ENCODE measurements at regions of chr12 and their contacts with region 1.

Region 1: GRCh38 chr12:96219698-96220206 is 25.6 kb downstream of the ELK3 start:
- DNase-seq: no peak
- H3K4me3 ChIP-seq: no peak overlapping the region
- H3K27ac ChIP-seq: peak overlapping the region in 1 of 2 experiments; percentile 3
- H3K4me1 ChIP-seq: peaks cover 19 to 43% (median 33%) of the 10 kb centered on the region in 4 experiments
- H3K27me3 ChIP-seq: no peaks in the 10 kb centered on the region

Region 2: DNA sequence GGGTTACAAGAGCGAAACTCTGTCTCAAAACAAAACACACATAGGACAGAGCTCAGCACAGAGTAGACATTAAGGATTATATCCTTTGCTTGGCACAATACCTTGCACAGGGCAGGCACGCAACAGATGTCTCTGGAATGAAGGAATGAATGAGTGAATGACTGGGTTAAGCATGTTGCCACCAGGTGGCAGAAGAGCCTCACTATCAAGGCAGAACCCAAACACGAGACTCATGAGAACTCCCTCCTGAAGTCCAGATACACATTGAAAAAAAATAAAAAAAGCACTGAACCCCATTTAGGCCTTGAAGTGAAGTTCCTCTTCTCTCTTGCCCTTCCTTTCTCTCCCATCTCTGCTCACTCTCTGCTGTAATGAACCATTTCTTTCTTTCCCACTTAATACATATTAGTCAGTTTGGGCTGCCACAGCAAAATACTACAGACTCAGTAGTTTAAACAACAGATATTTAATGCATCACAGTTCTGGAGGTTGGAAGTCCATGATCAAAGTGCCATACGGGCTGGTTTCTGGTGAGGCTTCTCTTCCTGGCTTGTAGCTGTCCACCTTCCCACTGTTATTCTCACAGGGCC is 157.8 kb before region 1 on chr12:
- CTCF ChIA-PET with region 1: interaction called, 225 read pairs
- POLR2A ChIA-PET with region 1: interaction called, 4 read pairs
- DNase-seq: peak; percentile 93 to 97 (median 95)
- H3K4me3 ChIP-seq: no peak overlapping the region
- H3K27ac ChIP-seq: no peak overlapping the region
- H3K4me1 ChIP-seq: peaks cover 5 to 20% (median 14%) of the 10 kb centered on the region in 4 experiments
- H3K27me3 ChIP-seq: no peaks in the 10 kb centered on the region

Region 3: DNA sequence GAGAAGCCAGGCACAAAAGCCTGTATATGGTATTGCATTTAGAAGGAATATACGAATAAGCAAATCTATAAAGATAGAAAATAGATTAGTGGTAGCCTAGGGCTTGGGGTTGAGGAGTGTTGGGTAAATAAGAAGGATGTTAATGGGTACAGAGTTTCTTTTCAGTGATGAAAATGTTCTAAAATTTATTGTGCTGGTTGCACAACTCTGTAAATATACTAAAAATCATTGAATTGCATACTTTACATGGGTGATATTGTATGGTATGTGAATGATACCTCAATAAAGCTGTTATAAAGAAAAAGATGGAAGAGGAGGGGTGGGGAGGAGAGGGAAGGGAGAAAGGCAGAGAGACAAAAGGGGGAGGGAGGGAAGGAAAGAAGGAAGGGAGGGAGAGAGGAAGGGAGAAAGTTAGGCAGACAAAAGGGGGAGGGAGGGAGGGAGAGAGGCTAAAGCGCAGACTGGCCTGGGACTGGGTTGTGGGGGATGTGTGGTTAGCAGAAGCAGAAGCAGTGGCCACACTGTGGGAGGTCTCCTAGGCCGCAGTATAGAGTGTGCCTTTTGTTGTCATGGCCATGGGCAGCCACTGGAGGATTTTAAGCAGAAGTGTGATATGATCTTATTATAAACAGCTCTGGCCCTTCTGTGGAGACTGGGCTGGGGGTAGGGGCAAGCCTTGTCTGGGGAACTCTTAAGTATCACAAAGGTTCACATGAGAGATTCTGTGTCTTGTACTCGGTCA is 99.2 kb before region 1 on chr12:
- CTCF ChIA-PET with region 1: interaction called, 11 read pairs
- POLR2A ChIA-PET with region 1: no interaction called
- DNase-seq: peak; percentile 86 to 97 (median 97)
- H3K4me3 ChIP-seq: peak overlapping the region in 2 of 7 experiments; percentile 4 to 61
- H3K27ac ChIP-seq: peak overlapping the region; percentile 27 to 59
- H3K4me1 ChIP-seq: peaks cover 8 to 35% (median 24%) of the 10 kb centered on the region in 4 experiments
- H3K27me3 ChIP-seq: no peaks in the 10 kb centered on the region

Region 4: GRCh38 chr12:96237465-96238077 is 17.8 kb after region 1 on chr12:
- CTCF ChIA-PET with region 1: interaction called, 10 read pairs
- POLR2A ChIA-PET with region 1: interaction called, 3 read pairs
- DNase-seq: peak; percentile 84 to 97 (median 95)
- H3K4me3 ChIP-seq: peak overlapping the region in 4 of 7 experiments; percentile 8 to 50 (median 36)
- H3K27ac ChIP-seq: peak overlapping the region; percentile 60 to 74
- H3K4me1 ChIP-seq: peaks cover 2 to 77% (median 53%) of the 10 kb centered on the region in 4 experiments
- H3K27me3 ChIP-seq: no peaks in the 10 kb centered on the region

Region 5: GRCh38 chr12:96263449-96263902 is 43.7 kb after region 1 on chr12:
- CTCF ChIA-PET with region 1: no interaction called
- POLR2A ChIA-PET with region 1: no interaction called
- DNase-seq: no peak
- H3K4me3 ChIP-seq: no peak overlapping the region
- H3K27ac ChIP-seq: no peak overlapping the region
- H3K4me1 ChIP-seq: no peaks in the 10 kb centered on the region
- H3K27me3 ChIP-seq: no peaks in the 10 kb centered on the region

Region 6: DNA sequence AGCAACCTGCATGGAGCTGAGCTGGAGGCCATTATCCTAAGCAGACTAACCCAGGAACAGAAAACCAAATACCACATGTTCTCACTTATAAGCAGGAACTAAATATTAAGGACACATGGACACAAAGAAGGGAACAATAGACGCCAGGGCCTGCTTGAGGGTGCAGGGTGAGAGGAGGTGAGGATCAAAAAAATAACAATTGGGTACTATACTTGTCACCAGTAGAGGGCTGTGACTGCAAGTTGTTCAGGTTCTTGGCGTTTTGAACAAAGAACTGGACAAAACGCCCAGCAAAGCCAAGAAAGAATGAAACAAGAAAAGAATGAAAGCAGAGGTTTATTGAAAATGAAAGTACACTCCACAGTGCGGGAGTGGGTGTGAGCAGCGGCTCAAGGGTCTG is 478.8 kb after region 1 on chr12:
- CTCF ChIA-PET with region 1: no interaction called
- POLR2A ChIA-PET with region 1: no interaction called
- DNase-seq: no peak
- H3K4me3 ChIP-seq: no peak overlapping the region
- H3K27ac ChIP-seq: no peak overlapping the region
- H3K4me1 ChIP-seq: no peaks in the 10 kb centered on the region
- H3K27me3 ChIP-seq: peaks cover 0 to 4% (median 0%) of the 10 kb centered on the region in 5 experiments